ENCODE measurements at regions of chr10 and their contacts with region 1.

Region 1: DNA sequence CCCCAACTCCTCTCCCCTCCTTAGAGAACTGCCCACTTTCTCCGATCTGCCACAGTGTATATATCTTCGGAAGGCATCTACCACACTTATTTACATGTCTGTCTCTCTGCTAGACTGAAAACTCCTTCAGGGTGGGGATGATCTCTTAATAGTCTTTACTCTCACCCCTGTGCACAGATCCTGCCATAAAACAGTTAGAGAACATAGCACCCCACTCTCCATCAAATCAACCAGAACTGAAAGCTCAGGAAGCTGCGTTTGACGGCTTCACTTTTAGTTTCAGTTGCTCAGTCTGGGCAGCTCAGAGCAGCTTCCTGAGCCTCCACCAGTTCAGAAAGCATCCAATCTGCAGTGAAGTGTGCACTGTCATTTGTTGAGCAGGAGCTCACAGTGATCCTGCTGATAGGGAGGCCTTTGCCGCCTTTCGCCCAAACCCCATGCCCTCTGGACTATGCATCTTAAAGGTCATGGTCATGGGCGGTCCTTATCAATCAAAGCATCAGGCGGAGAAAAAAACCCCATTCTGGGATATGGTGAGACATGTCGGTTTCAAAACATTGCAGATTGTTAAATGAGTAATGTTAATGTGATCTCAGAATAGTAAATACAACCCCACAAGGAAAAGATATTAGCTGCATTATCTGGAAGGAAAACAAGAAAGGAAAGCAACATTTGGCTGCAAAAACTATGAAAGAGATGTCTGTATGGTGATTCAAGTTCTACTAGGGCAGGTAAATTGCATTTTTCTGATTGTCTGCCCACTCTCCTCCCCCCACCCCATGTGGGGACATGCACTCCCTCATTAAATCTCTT is 167.1 kb upstream of the ADO start:
- DNase-seq: peak; percentile 32 to 82 (median 75)
- ATAC-seq: peak; percentile 86
- H3K4me3 ChIP-seq: peak overlapping the region; percentile 67
- H3K4me3 Mint-ChIP-seq: no peak overlapping the region
- H3K27ac ChIP-seq: peak overlapping the region; percentile 70
- H3K27ac Mint-ChIP-seq: no peak overlapping the region
- H3K4me1 ChIP-seq: peaks cover 18 to 41% of the 10 kb centered on the region in 2 donors
- H3K4me1 Mint-ChIP-seq: peaks cover 2 to 38% (median 6%) of the 10 kb centered on the region in 7 donors
- H3K27me3 ChIP-seq: no peaks in the 10 kb centered on the region
- H3K27me3 Mint-ChIP-seq: no peaks in the 10 kb centered on the region

Region 2: GRCh38 chr10:62610649-62611229 is 26.7 kb before region 1 on chr10:
- CTCF ChIA-PET with region 1: interaction called, 5 read pairs
- POLR2A ChIA-PET with region 1: interaction called, 3 read pairs
- intact Hi-C with region 1: loop called in 1 of 2 experiments (anchors 2 kb)
- DNase-seq: peak; percentile 48 to 81 (median 74)
- ATAC-seq: peak; percentile 93
- H3K4me3 ChIP-seq: no peak overlapping the region
- H3K4me3 Mint-ChIP-seq: no peak overlapping the region
- H3K27ac ChIP-seq: no peak overlapping the region
- H3K27ac Mint-ChIP-seq: peak overlapping the region in 1 of 9 donors; percentile 50
- H3K4me1 ChIP-seq: no peaks in the 10 kb centered on the region
- H3K4me1 Mint-ChIP-seq: peaks cover 0 to 36% (median 0%) of the 10 kb centered on the region in 7 donors
- H3K27me3 ChIP-seq: no peaks in the 10 kb centered on the region
- H3K27me3 Mint-ChIP-seq: peaks cover 0 to 14% (median 4%) of the 10 kb centered on the region in 5 donors

Region 3: GRCh38 chr10:62681211-62681940 is 43.9 kb after region 1 on chr10:
- CTCF ChIA-PET with region 1: interaction called, 3 read pairs
- POLR2A ChIA-PET with region 1: no interaction called
- intact Hi-C with region 1: loop called (anchors 1 to 5 kb)
- DNase-seq: peak in 8 of 9 donors; percentile 7 to 84 (median 22)
- ATAC-seq: peak; percentile 96
- H3K4me3 ChIP-seq: no peak overlapping the region
- H3K4me3 Mint-ChIP-seq: peak overlapping the region in 1 of 10 donors; percentile 59
- H3K27ac ChIP-seq: no peak overlapping the region
- H3K27ac Mint-ChIP-seq: peak overlapping the region in 3 of 9 donors; percentile 11 to 83 (median 78)
- H3K4me1 ChIP-seq: peaks cover 6 to 18% of the 10 kb centered on the region in 2 donors
- H3K4me1 Mint-ChIP-seq: peaks cover 8 to 45% (median 14%) of the 10 kb centered on the region in 7 donors
- H3K27me3 ChIP-seq: no peaks in the 10 kb centered on the region
- H3K27me3 Mint-ChIP-seq: peaks cover 0 to 6% (median 0%) of the 10 kb centered on the region in 5 donors

Region 4: DNA sequence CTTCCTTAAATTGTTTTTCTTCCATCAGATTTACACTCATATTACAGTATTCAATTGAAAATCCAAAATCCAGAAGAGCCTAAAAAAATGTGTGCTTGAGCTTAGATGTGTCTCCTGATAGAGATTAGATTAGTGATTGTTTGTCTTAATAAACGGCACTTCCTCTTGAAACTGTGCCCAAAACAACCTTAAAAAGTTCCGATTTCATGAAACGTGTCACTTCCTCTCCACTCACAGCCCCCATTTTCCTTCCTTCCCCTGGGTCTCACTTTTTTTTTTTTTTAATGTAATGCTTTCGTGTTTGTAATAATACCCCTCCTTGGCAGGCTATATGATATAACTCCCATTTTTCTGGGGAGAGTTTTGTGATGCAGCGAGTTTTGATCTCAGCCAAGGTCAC is 52.3 kb after region 1 on chr10:
- CTCF ChIA-PET with region 1: interaction called, 6 read pairs
- POLR2A ChIA-PET with region 1: no interaction called
- intact Hi-C with region 1: loop called in 1 of 2 experiments (anchors 5 kb)
- DNase-seq: peak in 4 of 9 donors; percentile 12 to 24 (median 18)
- ATAC-seq: peak; percentile 43
- H3K4me3 ChIP-seq: peak overlapping the region; percentile 23
- H3K4me3 Mint-ChIP-seq: peak overlapping the region; percentile 6 to 79 (median 67)
- H3K27ac ChIP-seq: no peak overlapping the region
- H3K27ac Mint-ChIP-seq: peak overlapping the region in 7 of 9 donors; percentile 4 to 65 (median 50)
- H3K4me1 ChIP-seq: peaks cover 30 to 37% of the 10 kb centered on the region in 2 donors
- H3K4me1 Mint-ChIP-seq: peaks cover 27 to 57% (median 48%) of the 10 kb centered on the region in 7 donors
- H3K27me3 ChIP-seq: no peaks in the 10 kb centered on the region
- H3K27me3 Mint-ChIP-seq: no peaks in the 10 kb centered on the region

Region 5: GRCh38 chr10:62779487-62780248 is 142.2 kb after region 1 on chr10:
- CTCF ChIA-PET with region 1: interaction called, 7 read pairs
- POLR2A ChIA-PET with region 1: interaction called, 9 read pairs
- intact Hi-C with region 1: loop called in 1 of 2 experiments (anchors 1 kb)
- DNase-seq: peak; percentile 35 to 88 (median 75)
- ATAC-seq: peak; percentile 97
- H3K4me3 ChIP-seq: no peak overlapping the region
- H3K4me3 Mint-ChIP-seq: peak overlapping the region; percentile 0 to 71 (median 52)
- H3K27ac ChIP-seq: no peak overlapping the region
- H3K27ac Mint-ChIP-seq: peak overlapping the region in 6 of 9 donors; percentile 0 to 79 (median 8)
- H3K4me1 ChIP-seq: peaks cover 13 to 15% of the 10 kb centered on the region in 2 donors
- H3K4me1 Mint-ChIP-seq: peaks cover 10 to 22% (median 17%) of the 10 kb centered on the region in 7 donors
- H3K27me3 ChIP-seq: no peaks in the 10 kb centered on the region
- H3K27me3 Mint-ChIP-seq: peaks cover 0 to 38% (median 0%) of the 10 kb centered on the region in 5 donors

Region 6: GRCh38 chr10:62804356-62805230 is 167.1 kb after region 1 on chr10 and contains the start of gene ADO:
- CTCF ChIA-PET with region 1: interaction called, 4 read pairs
- POLR2A ChIA-PET with region 1: interaction called, 21 read pairs
- intact Hi-C with region 1: loop called (anchors 1 kb)
- DNase-seq: peak; percentile 69 to 86 (median 80)
- ATAC-seq: peak; percentile 93
- H3K4me3 ChIP-seq: peak within 1 kb of the TSS; percentile 66
- H3K4me3 Mint-ChIP-seq: peak within 1 kb of the TSS; percentile 90 to 100 (median 96)
- H3K27ac ChIP-seq: peak within 1 kb of the TSS; percentile 86
- H3K27ac Mint-ChIP-seq: peak within 1 kb of the TSS; percentile 93 to 100 (median 98)
- H3K4me1 ChIP-seq: peaks cover 15 to 19% of the 10 kb centered on the region in 2 donors
- H3K4me1 Mint-ChIP-seq: peaks cover 22 to 47% (median 39%) of the 10 kb centered on the region in 7 donors
- H3K27me3 ChIP-seq: no peaks in the 10 kb centered on the region
- H3K27me3 Mint-ChIP-seq: peaks cover 0 to 20% (median 0%) of the 10 kb centered on the region in 5 donors
- total RNA-seq, gene ADO: 9.8 to 21.3 (median 15.6) TPM

Region 7: DNA sequence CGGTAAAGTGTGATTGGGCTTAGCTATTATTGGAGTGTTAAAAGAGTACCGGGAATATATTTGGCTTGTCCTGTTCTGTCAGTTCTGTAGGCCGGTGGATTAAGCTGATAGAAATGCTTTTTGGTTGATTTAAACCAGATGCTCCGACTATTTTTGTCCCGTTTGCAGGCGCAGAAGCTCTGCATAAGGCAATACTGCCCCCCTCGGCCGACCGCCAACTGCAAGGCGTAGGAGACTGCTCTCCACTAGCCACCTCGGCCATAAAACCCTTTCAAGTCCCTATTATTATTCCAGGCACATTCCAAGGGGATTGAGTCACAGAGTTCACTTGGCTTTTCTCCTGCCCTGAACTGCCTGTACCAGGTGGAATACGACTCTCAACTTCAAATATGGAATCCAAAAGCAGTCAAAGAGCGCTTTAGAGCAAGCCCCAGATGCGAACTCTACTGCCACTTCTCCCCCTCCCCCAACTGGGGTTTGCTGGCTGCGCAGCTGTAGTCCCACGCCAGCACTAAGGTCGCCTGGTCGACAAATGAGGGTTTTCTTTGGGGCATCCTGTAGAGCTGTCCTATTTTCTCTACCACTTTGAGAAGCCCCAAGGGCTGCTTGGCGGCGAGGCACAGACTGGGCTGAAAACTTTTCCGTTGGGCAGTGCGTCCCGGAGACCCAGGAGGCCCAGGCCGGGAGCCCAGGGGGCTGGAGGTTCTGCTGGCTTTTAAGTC is 992.1 kb after region 1 on chr10:
- CTCF ChIA-PET with region 1: no interaction called
- POLR2A ChIA-PET with region 1: no interaction called
- intact Hi-C with region 1: loop called in 1 of 2 experiments (anchors 2 kb)
- DNase-seq: peak; percentile 61 to 81 (median 78)
- ATAC-seq: peak; percentile 81
- H3K4me3 ChIP-seq: peak overlapping the region; percentile 90
- H3K4me3 Mint-ChIP-seq: peak overlapping the region; percentile 87 to 98 (median 95)
- H3K27ac ChIP-seq: peak overlapping the region; percentile 69
- H3K27ac Mint-ChIP-seq: peak overlapping the region; percentile 79 to 95 (median 90)
- H3K4me1 ChIP-seq: peaks cover 0 to 17% of the 10 kb centered on the region in 2 donors
- H3K4me1 Mint-ChIP-seq: peaks cover 19 to 40% (median 26%) of the 10 kb centered on the region in 7 donors
- H3K27me3 ChIP-seq: no peaks in the 10 kb centered on the region
- H3K27me3 Mint-ChIP-seq: peaks cover 0 to 3% (median 0%) of the 10 kb centered on the region in 5 donors

Measured in naive thymus-derived CD4-positive, alpha-beta T cell (primary cell).